Transverse colon (tissue), 4 donors: ENCODE measurements at regions of chr5 and their contacts with region 1.

Region 1: GRCh38 chr5:172454358-172455086 is at the start of gene SH3PXD2B:
- DNase-seq: peak; percentile 65
- H3K4me3 ChIP-seq: peak within 1 kb of the TSS; percentile 76 to 97 (median 91)
- H3K27ac ChIP-seq: peak within 1 kb of the TSS; percentile 89 to 96 (median 92)
- H3K4me1 ChIP-seq: peaks cover 8 to 40% (median 29%) of the 10 kb centered on the region in 4 donors
- H3K27me3 ChIP-seq: no peaks in the 10 kb centered on the region
- CTCF ChIP-seq: no peak
- EP300 ChIP-seq: no peak
- POLR2A ChIP-seq: no peak
- total RNA-seq, gene SH3PXD2B: 10.2 to 26.6 (median 14.6) TPM

Region 2: DNA sequence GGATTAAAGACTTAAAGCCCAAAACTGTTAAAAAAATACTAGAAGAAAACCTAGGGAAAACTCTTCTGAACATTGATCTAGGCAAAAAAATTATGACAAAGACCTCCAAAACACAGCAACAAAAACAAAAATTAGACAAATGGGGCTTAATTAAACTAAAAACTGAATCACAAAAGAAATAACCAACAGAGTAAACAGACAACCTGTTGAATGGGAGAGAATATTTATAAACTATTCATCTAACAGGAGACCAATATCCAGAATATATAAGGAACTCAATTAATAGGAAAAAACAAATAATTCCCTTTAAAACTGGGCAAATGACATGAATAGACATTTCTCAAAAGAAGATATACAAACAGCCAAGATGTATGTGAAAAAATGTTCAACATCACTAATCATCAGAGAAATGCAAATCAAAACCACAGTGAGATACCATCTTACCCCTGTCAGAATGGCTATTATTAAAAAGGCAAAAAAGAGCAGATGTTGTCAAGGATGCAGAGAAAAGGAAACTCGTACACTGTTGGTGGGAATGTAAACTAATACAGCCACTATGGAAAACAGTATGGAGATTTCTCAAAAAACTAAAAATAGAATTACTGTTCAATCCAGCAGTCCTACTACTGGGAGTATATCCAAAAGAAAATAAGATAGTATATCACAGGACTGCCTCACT is 1195.6 kb before region 1 on chr5:
- in situ Hi-C with region 1: no loop called
- intact Hi-C with region 1: no loop called
- DNase-seq: no peak
- H3K4me3 ChIP-seq: no peak overlapping the region
- H3K27ac ChIP-seq: no peak overlapping the region
- H3K4me1 ChIP-seq: no peaks in the 10 kb centered on the region
- H3K27me3 ChIP-seq: no peaks in the 10 kb centered on the region
- CTCF ChIP-seq: no peak
- EP300 ChIP-seq: no peak
- POLR2A ChIP-seq: no peak

Region 3: DNA sequence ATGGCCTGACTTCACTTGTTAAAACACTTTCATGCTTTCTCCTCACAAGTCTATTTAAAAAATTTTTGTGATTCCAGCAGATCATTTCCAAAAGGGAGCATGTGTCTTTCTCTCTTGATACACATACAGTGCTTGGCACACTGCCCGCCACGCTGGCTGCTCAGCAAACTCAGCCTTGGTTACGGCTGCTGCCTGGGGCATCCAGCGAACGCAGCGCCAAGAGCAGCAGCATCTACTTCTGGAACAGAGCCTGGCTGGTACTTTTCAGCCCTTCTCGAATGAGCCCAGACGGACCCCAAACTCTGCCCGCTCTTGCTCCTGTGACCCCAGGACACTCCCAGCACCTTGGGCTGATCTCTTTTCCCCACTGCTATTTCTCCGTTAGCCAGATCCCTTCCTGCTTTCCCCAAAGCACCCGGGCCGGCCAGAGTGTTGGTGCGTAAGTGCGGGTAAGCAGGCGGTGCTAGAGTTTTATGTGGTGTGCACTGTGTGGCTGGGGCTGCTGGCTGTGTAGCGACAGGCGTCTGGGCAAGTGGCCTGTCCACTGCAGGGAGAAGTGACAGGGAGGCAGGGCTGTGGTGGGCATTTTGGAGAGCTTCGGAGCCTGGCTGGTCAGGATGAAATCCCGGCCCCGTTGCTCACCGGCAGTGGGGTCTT is 73.4 kb before region 1 on chr5:
- in situ Hi-C with region 1: no loop called
- intact Hi-C with region 1: loop called (anchors 5 kb)
- DNase-seq: peak; percentile 46
- H3K4me3 ChIP-seq: no peak overlapping the region
- H3K27ac ChIP-seq: peak overlapping the region in 3 of 4 donors; percentile 39 to 64 (median 53)
- H3K4me1 ChIP-seq: peaks cover 0 to 13% (median 5%) of the 10 kb centered on the region in 4 donors
- H3K27me3 ChIP-seq: no peaks in the 10 kb centered on the region
- CTCF ChIP-seq: no peak
- EP300 ChIP-seq: no peak
- POLR2A ChIP-seq: no peak

Region 4: GRCh38 chr5:172417983-172418630 is 36.4 kb before region 1 on chr5:
- in situ Hi-C with region 1: no loop called
- intact Hi-C with region 1: loop called (anchors 5 kb)
- DNase-seq: peak; percentile 82
- H3K4me3 ChIP-seq: no peak overlapping the region
- H3K27ac ChIP-seq: peak overlapping the region; percentile 82 to 86 (median 84)
- H3K4me1 ChIP-seq: peaks cover 42 to 70% (median 57%) of the 10 kb centered on the region in 4 donors
- H3K27me3 ChIP-seq: no peaks in the 10 kb centered on the region
- CTCF ChIP-seq: no peak
- EP300 ChIP-seq: peak; percentile 62
- POLR2A ChIP-seq: no peak

Region 5: GRCh38 chr5:172777881-172778814 is 323.6 kb after region 1 on chr5:
- in situ Hi-C with region 1: no loop called
- intact Hi-C with region 1: no loop called
- DNase-seq: peak; percentile 70
- H3K4me3 ChIP-seq: no peak overlapping the region
- H3K27ac ChIP-seq: peak overlapping the region; percentile 99 to 100 (median 100)
- H3K4me1 ChIP-seq: peaks cover 35 to 88% (median 66%) of the 10 kb centered on the region in 4 donors
- H3K27me3 ChIP-seq: no peaks in the 10 kb centered on the region
- CTCF ChIP-seq: no peak
- EP300 ChIP-seq: no peak
- POLR2A ChIP-seq: peak; percentile 37

Region 6: DNA sequence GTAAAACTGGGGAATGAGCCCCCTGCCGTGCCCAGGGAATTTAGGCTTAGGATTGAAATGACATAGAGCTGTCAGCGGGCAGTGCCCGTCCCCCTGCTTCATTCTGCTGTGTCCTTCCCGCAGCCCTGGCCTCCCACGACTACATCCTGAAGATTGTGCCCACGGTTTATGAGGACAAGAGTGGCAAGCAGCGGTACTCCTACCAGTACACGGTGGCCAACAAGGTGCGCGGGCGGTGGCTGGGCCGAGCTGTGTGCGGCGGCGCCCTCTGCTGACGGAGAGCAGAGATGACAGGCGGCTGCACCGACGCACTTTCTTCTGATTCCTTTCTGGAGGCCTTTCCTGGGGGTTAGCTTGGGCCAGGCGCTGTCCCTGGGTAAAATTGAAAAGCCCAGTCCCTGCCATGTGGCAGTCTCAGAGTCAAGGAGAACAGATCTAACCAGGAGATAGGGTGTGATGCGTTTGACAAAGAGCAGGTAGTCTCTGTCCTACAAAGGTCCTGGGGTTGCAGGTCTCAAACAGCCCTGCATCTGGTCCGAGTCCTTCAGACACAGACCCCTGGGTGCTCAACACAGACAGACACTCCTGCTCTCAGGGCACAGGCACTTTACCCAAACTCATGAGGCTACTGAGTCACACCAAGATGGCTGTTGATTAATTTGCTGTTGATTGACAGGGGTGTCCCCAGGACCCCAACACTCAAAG is 477.9 kb after region 1 on chr5:
- in situ Hi-C with region 1: loop called in 2 of 4 experiments (anchors 25 kb)
- intact Hi-C with region 1: no loop called
- DNase-seq: peak; percentile 77
- H3K4me3 ChIP-seq: no peak overlapping the region
- H3K27ac ChIP-seq: peak overlapping the region in 2 of 4 donors; percentile 33 to 44
- H3K4me1 ChIP-seq: peaks cover 0 to 4% (median 0%) of the 10 kb centered on the region in 4 donors
- H3K27me3 ChIP-seq: no peaks in the 10 kb centered on the region
- CTCF ChIP-seq: peak; percentile 95 to 98 (median 96)
- EP300 ChIP-seq: no peak
- POLR2A ChIP-seq: no peak